ENCODE measurements at regions of chr19 and their contacts with region 1.

Region 1: GRCh38 chr19:17859533-17860330 is at the start of gene RPL18A:
- DNase-seq: peak; percentile 100
- H3K4me3 Mint-ChIP-seq: peak within 1 kb of the TSS; percentile 95
- H3K27ac Mint-ChIP-seq: peak within 1 kb of the TSS; percentile 93
- H3K4me1 Mint-ChIP-seq: peaks cover 42% of the 10 kb centered on the region
- H3K27me3 Mint-ChIP-seq: no peaks in the 10 kb centered on the region
- total RNA-seq, gene RPL18A: 2,013 to 2,059 TPM

Region 2: GRCh38 chr19:17718947-17719711 is 140.6 kb before region 1 on chr19 and contains the start of gene MAP1S:
- CTCF ChIA-PET with region 1: interaction called, 11 read pairs
- POLR2A ChIA-PET with region 1: interaction called, 3 read pairs
- DNase-seq: peak; percentile 73
- H3K4me3 Mint-ChIP-seq: peak within 1 kb of the TSS; percentile 84
- H3K27ac Mint-ChIP-seq: peak within 1 kb of the TSS; percentile 75
- H3K4me1 Mint-ChIP-seq: peaks cover 38% of the 10 kb centered on the region
- H3K27me3 Mint-ChIP-seq: no peaks in the 10 kb centered on the region
- total RNA-seq, gene MAP1S: 66.2 to 76.2 TPM

Region 3: DNA sequence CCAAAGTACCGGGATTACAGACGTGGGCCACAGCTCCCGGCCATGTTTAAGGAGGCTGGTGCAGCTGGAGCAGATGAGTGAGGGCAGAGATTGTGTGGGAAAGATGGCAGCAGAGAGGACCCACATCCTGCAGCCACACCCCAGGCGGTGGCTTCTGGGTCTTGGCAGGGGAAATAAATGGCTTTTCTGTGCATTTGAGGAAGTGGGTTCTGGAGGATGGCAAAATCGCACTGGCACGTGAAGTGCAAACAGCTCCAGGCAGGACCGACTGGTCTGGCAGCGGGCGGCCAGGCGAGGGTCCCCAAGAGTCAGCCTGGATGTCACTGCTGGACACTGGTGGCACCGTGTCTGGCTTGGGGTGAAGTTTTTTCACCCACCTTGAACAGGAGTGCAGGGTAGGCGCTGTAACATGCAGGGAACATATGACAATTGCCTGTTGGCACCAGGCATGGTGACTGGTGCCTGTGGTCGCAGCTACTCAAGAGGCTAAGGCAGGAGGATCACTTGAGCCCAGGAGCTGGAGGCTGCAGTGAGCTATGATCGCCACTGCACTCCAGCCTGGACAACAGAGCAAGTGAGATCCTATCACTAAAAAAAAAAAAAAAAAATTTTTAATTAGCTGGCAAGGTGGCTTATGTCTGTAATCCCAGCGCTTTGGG is 56.3 kb before region 1 on chr19:
- CTCF ChIA-PET with region 1: interaction called, 16 read pairs
- POLR2A ChIA-PET with region 1: interaction called, 13 read pairs
- DNase-seq: peak; percentile 78
- H3K4me3 Mint-ChIP-seq: peak overlapping the region; percentile 49
- H3K27ac Mint-ChIP-seq: peak overlapping the region; percentile 97
- H3K4me1 Mint-ChIP-seq: peaks cover 49% of the 10 kb centered on the region
- H3K27me3 Mint-ChIP-seq: peaks cover 8% of the 10 kb centered on the region

Region 4: GRCh38 chr19:17873786-17874757 is 14.3 kb after region 1 on chr19:
- CTCF ChIA-PET with region 1: interaction called, 29 read pairs
- POLR2A ChIA-PET with region 1: interaction called, 77 read pairs
- DNase-seq: peak; percentile 75
- H3K4me3 Mint-ChIP-seq: peak overlapping the region; percentile 89
- H3K27ac Mint-ChIP-seq: no peak overlapping the region
- H3K4me1 Mint-ChIP-seq: peaks cover 27% of the 10 kb centered on the region
- H3K27me3 Mint-ChIP-seq: no peaks in the 10 kb centered on the region

Region 5: DNA sequence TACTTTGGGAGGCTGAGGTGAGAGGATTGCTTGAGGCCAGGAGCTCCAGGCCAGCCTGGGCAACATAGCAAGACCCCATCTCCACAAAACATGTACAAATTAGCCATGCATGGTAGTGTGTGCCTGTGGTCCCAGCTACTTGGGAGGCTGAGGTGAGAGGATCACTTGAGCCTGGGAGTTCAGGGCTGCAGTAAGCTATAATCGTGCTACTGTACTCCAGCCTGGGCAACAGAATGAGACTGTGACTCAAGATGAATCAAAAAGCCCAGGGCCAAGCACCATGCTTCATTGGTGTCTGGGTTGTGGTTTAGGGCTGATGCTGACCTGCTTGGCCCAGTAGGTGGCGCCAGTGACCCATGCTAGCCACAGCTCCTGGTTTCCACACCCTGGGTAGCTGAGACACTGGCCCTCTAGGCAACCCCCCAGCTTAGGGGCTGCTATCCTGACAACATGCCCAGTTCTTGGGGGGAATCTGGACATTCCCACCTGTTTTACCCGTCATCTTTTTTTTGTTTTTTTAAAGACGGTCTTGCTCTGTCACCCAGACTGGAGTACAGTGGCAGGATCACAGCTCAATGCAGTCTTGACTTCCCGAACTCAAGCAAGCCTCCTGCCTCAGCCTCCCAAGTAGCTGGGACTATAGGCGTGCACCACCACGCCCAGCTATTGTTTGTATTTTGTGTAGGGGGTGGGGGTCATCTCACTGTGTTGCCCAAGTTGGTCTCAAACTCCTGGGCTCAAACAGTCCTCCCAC is 78.5 kb after region 1 on chr19:
- CTCF ChIA-PET with region 1: interaction called, 313 read pairs
- POLR2A ChIA-PET with region 1: interaction called, 131 read pairs
- DNase-seq: peak; percentile 87
- H3K4me3 Mint-ChIP-seq: no peak overlapping the region
- H3K27ac Mint-ChIP-seq: no peak overlapping the region
- H3K4me1 Mint-ChIP-seq: peaks cover 8% of the 10 kb centered on the region
- H3K27me3 Mint-ChIP-seq: no peaks in the 10 kb centered on the region

Region 6: GRCh38 chr19:18000935-18001778 is 141.4 kb after region 1 on chr19:
- CTCF ChIA-PET with region 1: interaction called, 12 read pairs
- POLR2A ChIA-PET with region 1: interaction called, 12 read pairs
- DNase-seq: peak; percentile 94
- H3K4me3 Mint-ChIP-seq: peak overlapping the region; percentile 94
- H3K27ac Mint-ChIP-seq: peak overlapping the region; percentile 99
- H3K4me1 Mint-ChIP-seq: peaks cover 35% of the 10 kb centered on the region
- H3K27me3 Mint-ChIP-seq: peaks cover 2% of the 10 kb centered on the region